ENCODE measurements at regions of chr5 and their contacts with region 1.

Region 1: DNA sequence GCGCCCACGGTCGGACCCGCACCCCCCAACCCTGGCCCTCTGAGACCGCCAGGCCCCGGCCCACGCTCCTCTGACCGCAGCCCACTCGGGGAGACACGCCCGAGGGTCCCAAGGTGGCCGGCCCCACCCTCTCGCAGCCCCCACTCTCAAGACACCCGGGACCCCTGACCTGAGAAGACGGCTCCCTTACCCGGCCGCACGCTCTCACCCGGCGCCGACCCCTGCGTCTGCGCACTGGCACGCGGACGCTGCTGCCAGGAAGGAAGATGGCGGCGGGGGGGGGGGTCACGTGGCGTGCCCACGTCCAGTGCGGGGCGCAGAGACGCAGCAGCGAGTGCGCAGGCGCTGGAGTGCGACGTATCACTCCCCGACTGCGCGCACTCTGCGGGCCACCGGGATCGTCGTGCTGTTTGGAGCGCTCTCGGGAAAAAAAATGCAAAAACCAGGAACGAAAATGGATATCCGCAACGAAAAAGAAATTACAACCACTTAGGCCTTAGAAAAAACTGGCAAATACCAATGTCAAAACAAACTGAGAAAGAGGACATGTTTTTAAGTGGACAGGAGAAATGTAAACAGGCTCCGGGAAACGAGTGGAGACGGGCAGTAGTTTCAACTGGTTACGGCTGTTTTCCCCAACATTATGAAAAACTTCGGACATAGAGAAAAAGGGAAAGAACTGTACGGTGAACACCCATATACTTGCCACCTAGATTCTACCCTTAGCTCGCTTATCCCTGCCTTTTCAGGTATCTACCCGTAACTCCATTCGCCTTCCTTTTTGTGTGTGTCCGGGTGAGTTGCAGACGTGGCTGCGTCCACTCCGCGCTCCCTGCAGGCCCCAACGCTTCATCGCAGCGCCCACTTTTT is at the start of gene MRPL36:
- DNase-seq: peak; percentile 95
- total RNA-seq, gene MRPL36: 43.2 TPM

Region 2: DNA sequence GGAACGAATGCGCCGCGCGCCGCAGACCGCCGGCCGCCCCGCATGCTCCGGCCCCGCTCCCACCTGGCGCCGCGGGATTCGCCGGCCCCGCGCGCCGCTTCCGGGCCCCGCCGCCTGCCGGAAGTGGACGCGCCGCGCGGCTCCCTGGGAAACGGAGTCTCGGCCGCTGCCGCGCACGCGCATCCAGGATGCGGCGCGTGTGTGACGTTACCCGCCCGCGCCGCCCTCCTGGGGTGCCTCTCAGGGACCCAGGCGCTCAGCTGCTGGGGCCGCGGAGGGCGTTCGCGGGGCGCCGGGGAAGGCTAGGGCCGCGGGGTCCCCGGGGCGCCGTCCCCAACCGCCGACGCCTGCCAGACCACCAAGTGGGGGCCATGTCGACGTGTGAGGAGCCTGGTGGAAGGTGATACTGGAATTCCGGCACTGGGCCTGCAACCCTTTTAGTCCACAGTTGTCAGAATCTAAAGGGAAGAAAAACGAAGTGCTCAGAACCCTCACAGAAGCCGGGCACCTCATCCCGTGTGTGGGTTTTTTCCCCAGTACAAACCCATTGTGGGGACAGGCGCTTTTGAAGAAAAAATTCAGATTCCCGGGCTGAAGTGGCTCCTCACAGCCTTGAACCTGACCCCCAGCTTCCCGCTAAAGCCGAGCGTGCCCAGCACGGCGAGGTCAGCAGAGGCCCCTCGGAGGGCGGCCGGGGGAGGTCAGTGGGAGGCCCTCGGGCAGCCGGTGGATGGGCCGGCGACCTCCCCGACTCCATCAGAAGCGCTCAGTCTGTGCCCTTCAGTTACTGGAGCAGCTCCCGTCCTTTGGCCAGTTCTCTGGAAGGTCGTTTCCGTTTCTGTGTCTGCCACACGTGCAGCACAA is 454.6 kb before region 1 on chr5 and contains the start of gene CLPTM1L:
- intact Hi-C with region 1: loop called (anchors 10 kb)
- DNase-seq: peak; percentile 91
- total RNA-seq, gene CLPTM1L: 42.6 TPM

Region 3: DNA sequence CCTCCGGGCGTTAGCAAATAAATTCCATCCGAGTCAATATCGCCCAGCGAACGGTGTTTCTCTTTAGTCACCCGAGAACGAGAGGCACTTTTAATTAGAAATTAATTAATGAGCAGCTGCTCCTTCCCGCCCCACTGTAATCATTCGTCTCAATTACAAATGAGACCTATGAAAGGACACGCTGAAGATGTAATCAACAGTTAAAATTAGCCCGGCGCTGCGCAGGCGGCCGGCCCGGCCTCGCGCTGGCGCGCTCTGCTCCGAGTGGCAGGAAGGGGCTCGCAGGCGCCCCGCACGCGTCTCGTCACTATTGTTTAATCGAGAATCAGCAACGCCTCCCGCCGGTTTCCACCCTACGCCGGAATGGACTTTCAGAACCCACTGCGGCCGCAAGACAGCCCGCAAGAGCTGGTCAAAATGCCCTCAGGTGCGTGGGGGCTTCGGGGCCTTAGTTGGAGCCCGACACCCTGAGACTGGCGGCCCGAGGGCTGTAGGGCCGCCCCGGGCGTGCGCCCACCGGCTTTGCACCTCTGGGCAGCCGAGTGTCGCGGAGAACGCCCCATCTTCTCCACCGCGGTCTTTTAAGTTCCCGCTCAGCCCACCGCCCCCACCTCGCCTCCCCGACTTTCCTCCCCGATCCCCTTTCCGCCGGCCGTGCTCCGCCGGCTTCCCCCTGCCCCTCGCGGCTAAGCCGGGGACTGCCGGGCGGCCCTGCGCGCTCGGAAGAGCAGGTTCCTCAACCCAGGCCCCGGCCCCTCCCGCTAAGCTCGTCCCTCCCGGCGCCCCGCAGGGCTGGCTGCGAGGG is 83.5 kb after region 1 on chr5:
- intact Hi-C with region 1: loop called (anchors 2 kb)
- DNase-seq: no peak

Region 4: DNA sequence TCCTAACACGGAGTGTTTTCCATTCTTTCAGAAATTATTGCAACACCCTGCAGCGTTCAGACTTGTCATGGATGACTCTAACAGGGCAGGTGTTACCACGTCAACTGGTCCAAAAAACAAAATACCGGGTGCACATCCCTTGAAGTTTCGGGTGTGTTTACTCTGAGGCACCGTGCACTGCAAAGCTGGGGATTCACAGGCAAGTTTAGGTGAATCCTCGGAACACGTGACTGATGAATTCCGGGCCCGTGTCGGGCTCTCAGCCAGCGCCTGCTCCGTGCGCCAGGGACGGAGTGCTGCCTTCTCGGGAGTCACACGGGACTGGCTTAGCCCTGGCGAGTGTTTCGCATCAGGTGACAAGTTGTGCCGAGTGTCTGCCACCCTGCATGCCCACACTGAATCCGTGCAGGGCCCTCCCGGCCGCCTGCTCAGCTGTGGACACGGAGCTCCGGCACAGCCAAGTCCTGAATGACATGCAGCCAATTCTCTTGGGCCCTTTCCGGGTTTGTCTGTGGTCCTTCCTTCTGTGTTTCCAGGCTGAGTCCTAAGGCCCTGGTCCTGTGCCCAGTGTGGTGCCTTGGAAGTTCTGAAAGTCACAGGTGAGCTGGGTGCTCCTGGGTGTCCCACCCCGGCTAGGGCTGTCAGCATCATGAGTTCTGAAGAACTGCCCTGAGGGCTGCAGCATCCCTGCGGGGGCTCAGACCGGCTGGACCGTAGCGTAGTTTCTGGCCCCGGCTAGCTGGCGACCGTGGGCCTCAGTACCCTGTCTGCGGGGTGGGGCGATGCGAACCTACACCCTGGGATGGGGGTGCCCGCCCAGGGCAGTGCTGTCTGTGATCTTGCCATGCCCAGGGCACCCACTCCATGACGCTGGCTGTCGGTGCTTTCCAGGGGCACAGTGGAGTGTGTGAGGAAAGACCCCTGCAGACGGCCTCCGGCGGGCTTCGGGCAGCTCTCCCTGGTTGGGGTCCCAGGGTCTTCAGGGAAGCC is 149.1 kb after region 1 on chr5:
- intact Hi-C with region 1: loop called (anchors 2 kb)
- DNase-seq: peak; percentile 87

Region 5: GRCh38 chr5:2848651-2849050 is 1048.8 kb after region 1 on chr5:
- intact Hi-C with region 1: no loop called
- DNase-seq: no peak

Measured in cardiac septum (tissue), 1 donor.